Esophagus muscularis mucosa (tissue), 4 donors: ENCODE measurements at regions of chr21 and their contacts with region 1.

Region 1: GRCh38 chr21:42467140-42467983 is 28.7 kb downstream of the RSPH1 start:
- DNase-seq: no peak
- H3K4me3 ChIP-seq: no peak overlapping the region
- H3K27ac ChIP-seq: no peak overlapping the region
- H3K4me1 ChIP-seq: peaks cover 4 to 12% (median 8%) of the 10 kb centered on the region in 4 donors
- H3K27me3 ChIP-seq: peaks cover 0 to 12% (median 0%) of the 10 kb centered on the region in 4 donors
- CTCF ChIP-seq: peak; percentile 28 to 48 (median 45)
- EP300 ChIP-seq: no peak
- POLR2A ChIP-seq: no peak

Region 2: DNA sequence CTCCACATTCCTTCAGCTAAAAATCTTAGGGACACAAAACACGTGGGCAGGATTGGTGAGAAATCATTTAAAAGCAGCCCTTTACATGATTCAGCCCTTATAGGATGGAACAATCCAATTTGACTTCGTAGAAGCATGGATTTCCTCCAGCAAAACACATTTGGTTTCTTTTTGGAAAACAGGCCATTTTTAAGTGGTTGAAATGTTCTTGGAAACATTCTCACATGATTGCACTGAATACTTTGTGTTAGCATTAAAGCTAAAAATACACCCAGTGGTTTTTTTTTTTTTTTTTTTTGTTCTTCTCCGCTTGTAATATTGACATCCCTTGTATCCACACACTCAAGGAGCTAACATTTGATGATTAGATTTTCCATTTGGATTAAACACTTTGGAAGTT is 290.5 kb before region 1 on chr21:
- intact Hi-C with region 1: no loop called
- DNase-seq: peak; percentile 24
- H3K4me3 ChIP-seq: no peak overlapping the region
- H3K27ac ChIP-seq: peak overlapping the region in 3 of 4 donors; percentile 52 to 60 (median 57)
- H3K4me1 ChIP-seq: peaks cover 4 to 16% (median 13%) of the 10 kb centered on the region in 4 donors
- H3K27me3 ChIP-seq: no peaks in the 10 kb centered on the region
- CTCF ChIP-seq: no peak
- EP300 ChIP-seq: no peak
- POLR2A ChIP-seq: no peak

Region 3: GRCh38 chr21:42537106-42537742 is 69.9 kb after region 1 on chr21:
- intact Hi-C with region 1: loop called (anchors 5 kb)
- DNase-seq: no peak
- H3K4me3 ChIP-seq: no peak overlapping the region
- H3K27ac ChIP-seq: no peak overlapping the region
- H3K4me1 ChIP-seq: peaks cover 11 to 19% (median 15%) of the 10 kb centered on the region in 4 donors
- H3K27me3 ChIP-seq: no peaks in the 10 kb centered on the region
- CTCF ChIP-seq: peak in 2 of 3 experiments; percentile 31 to 60
- EP300 ChIP-seq: no peak
- POLR2A ChIP-seq: no peak